OCI-LY7 (cell line): ENCODE measurements at regions of chr15 and their contacts with region 1.

Region 1: GRCh38 chr15:55318588-55319494 is at the starts of genes PIGB and PIGBOS1:
- DNase-seq: peak; percentile 89
- H3K4me3 ChIP-seq: peak within 1 kb of the TSS; percentile 82
- H3K27ac ChIP-seq: peak within 1 kb of the TSS; percentile 67
- H3K4me1 ChIP-seq: peaks cover 22% of the 10 kb centered on the region
- CTCF ChIP-seq: no peak
- total RNA-seq, gene PIGB: 8.7 and 10.3 TPM in 2 replicates
- total RNA-seq, gene PIGBOS1: 10.1 and 10.4 TPM in 2 replicates

Region 2: DNA sequence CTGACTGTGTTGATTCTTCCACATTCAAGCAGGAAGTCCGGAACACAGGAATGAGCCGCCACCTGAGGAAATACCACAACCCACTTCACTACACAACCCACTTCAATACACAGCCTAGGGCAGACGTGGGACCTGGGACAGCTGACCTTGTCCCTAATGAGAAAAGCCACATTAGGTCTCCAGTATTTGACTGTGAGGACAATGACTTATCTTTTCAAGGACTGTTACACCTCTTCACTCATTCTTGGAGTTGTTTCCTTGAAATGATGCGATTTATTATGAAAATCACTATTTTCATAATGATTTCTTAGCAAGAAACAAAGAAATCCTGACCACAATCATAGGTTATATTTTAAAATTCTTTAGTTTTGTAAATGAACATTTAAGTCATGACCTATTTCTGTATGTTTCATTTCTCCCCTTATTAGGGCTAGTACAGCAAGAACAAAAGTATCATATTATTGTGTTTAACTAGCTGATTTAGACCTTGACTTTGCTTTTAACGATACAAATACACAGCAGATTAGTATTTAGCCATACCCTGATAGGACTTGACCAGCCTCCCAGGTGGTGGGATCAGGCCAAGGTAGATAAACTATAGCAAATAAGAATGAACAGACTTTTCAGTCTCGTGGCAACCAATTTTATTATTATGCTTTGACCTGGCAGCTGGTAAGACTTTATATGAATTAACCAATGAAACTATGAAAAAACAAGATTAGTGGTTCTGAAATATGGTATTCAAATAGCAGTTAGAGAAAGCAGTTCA is 35.3 kb before region 1 on chr15:
- CTCF ChIA-PET with region 1: no interaction called
- POLR2A ChIA-PET with region 1: no interaction called
- intact Hi-C with region 1: no loop called
- DNase-seq: no peak
- H3K4me3 ChIP-seq: no peak overlapping the region
- H3K27ac ChIP-seq: no peak overlapping the region
- H3K4me1 ChIP-seq: peaks cover 8% of the 10 kb centered on the region
- CTCF ChIP-seq: no peak

Region 3: DNA sequence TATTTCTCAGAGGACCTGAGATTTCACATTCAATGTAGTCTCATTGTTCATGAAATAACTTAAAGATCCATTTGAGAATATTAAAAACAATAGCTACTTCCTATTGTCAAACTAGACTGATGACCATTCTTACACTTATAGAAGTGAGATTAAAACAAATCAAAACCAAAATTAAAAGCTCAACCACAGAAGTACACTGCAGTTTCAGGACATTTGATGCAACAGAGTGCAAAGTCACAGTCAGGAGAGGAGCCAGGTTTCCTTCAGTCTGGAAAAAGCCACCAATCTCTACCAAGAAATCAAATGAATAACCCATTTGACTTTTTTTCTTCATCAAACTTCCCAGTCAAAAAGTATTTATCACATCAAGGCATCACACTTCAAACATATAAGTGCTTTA is 83.9 kb after region 1 on chr15:
- CTCF ChIA-PET with region 1: interaction called, 4 read pairs
- POLR2A ChIA-PET with region 1: interaction called, 14 read pairs
- intact Hi-C with region 1: loop called (anchors 2 kb)
- DNase-seq: peak; percentile 12
- H3K4me3 ChIP-seq: peak overlapping the region; percentile 50
- H3K27ac ChIP-seq: peak overlapping the region; percentile 67
- H3K4me1 ChIP-seq: peaks cover 54% of the 10 kb centered on the region
- CTCF ChIP-seq: no peak

Region 4: DNA sequence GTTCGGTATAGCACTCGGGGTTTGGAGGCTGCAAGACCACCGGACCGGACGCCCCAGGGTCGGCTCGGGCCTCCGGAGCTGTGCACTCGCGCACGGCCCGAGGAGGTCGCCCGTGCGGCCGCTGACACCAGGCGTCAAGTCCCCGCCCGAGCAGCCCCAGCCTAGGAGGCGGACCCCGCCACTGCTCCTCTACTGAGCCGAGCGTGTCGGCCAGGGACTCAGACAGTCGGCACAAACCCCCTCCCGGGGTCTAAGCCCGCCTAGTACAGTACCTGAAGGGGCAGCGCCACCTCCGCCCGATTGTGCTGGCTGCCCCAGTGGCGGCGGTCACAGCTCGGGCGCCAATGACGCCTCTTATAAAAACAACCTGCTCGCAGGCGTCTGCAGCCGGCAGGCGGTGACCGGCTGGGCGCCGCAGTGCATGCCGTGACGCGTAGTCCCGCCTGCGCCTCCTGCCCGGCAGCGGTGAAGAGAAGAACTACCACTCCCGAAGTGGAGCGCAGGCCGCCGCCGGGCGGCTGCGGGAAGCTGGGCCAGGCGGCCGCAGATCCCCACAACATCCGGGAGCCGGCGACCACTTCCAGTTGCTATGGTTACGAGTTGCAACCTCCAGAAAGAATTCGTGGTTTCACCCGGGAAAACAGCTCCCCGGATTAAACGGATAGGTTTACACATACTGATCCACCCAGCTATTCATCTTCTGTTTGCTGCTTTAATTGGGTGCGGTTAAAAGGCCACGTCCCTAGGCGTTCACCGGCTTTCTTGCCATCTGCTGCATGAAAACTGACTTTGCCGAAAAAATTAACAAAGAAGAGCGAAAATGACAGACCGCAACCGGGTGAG is 89.3 kb after region 1 on chr15 and contains the starts of genes CCPG1 and PIERCE2:
- CTCF ChIA-PET with region 1: interaction called, 4 read pairs
- POLR2A ChIA-PET with region 1: interaction called, 14 read pairs
- intact Hi-C with region 1: loop called (anchors 1 kb)
- DNase-seq: peak; percentile 95
- H3K4me3 ChIP-seq: peak within 1 kb of the TSS; percentile 76
- H3K27ac ChIP-seq: peak within 1 kb of the TSS; percentile 65
- H3K4me1 ChIP-seq: peaks cover 44% of the 10 kb centered on the region
- CTCF ChIP-seq: peak; percentile 62
- total RNA-seq, gene CCPG1: 9.2 and 9.8 TPM in 2 replicates
- total RNA-seq, gene PIERCE2: 0.51 and 1.3 TPM in 2 replicates